Posterior cingulate gyrus (tissue), 11 donors: ENCODE measurements at regions of chr9 and their contacts with region 1.

Region 1: DNA sequence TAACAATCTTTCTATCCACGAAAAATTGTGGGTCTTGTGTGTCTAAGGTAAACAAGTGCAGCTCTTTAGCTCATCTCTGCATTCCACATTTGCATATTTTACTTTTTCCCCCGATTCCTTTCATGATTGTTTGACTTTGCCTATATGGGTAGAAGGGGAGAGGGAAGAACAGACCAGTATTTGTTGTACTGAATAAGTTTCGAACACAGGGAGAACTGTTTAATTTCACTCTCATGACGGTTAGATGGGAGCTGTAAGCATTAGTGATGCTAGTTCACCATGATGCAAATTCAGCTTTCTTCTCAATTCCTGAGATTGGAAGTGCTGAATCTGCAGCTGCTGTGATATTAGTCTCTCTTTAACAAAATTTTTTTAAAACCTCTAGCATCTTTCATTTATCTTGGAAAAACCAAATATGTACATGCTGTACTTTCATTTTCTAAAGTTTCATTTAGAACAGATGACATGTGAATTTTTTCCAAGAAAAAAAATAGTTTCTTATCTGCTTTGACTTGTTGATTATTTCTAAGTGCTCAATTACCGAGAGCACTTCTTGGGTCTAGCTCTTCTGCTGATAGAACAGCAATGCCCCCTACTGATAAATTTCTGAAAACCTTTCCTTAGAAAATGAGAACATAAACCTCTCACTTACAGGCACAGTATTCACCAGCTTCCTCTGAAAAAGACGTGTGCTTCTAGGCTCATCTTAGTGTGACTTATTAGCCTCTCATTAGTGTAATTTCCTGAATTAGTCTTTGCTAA is 149.5 kb downstream of the BAAT start:
- DNase-seq: no peak

Region 2: DNA sequence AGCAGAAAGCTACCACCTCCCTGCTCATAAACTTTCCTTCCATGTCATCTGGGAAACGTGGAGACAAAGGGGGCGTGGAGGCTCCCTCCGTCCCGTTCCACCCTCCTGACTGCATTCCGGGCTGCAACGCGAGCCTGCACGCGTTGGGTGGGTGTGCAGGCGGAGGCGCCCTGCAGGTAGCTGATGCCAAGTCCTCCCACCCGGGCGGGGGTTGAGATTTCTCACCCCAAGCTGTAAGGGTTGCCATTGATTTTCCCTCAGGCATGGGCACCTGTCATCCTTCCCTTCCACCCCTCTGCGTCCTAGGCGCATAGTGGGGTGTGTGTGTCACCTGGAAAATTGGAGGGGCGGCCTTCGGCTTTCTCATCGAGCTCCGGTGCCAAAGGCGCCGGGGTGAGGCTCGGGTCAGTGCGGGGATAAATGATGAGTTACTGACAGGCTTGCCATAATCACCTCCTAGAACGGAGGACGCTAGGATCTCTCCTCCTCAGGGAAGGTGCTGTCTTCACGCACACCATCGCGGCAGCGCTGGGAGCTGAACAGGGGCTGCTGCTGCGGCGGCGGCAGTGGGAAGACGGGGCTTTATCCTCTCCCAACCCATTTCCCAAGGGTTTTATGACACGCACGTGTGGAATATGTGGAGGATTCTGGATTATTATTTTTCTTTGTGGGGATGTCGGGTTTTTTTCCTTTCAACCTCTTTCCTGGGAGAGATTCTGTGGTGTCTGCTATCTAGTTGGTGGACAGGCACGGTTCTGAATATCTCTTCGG is 205.8 kb before region 1 on chr9:
- intact Hi-C with region 1: loop called (anchors 10 kb)
- DNase-seq: peak in 5 of 10 donors; percentile 25 to 87 (median 73)

Region 3: GRCh38 chr9:101119206-101119819 is 116.0 kb before region 1 on chr9:
- intact Hi-C with region 1: loop called (anchors 1 kb)
- DNase-seq: peak; percentile 36 to 96 (median 74)

Region 4: DNA sequence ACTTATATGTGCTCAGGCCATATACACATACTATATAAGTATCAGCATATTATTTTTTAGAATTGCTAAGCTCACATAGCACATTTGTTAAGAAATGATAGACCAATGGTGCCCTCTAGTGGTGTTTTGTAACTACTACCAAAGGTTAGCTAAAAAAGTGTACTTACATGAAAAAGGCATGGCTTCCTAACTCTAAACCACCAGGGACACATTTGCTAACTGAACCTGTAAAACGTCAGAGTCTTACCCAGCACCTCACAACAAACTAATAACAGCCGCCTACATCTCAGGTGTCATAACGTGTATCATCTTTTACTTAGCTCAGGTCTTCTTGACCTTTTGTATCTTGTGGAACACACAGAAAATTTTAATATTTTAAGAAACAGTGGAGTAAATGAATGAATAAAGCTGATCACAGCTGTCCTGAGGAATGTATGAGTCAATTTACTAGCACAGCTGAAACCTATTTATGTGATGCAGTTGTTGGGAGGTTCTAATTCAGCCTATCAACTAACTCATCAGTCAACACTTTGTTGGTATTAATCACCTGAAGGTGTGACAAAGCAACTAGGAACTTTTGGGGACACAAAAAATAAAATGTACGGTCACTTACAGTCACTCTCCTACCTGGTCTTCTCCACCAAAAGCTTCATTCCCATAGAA is 76.6 kb after region 1 on chr9:
- intact Hi-C with region 1: loop called (anchors 5 kb)
- DNase-seq: no peak